ENCODE measurements at regions of chr1 and their contacts with region 1.

Region 1: DNA sequence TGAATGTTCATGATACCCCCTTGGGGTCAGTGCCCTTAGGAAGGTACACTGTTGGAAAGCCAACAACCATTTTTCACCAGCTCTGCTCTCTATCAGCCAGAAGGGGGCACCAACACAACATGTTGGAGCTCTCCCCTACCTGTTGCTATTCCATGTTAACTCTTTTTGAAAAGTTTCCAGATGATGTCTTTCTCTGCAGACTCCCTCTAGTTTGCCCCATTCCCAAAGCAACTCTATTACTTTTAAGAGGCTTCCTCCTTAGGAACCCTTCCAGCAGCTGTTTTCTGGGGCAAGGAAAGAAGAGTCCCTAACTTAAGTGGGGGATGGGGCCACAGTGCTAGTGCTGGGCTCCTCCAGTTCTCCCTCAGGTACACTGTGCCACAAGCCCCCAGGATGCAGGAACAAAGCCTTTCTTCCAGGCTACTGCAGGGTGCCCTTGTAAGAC is 22.9 kb upstream of the NDC1 start:
- DNase-seq: no peak
- ATAC-seq: peak; percentile 68
- H3K4me3 Mint-ChIP-seq: no peak overlapping the region
- H3K27ac Mint-ChIP-seq: no peak overlapping the region
- H3K4me1 Mint-ChIP-seq: peaks cover 25% of the 10 kb centered on the region
- H3K27me3 Mint-ChIP-seq: no peaks in the 10 kb centered on the region
- CTCF ChIP-seq: peak; percentile 42

Region 2: DNA sequence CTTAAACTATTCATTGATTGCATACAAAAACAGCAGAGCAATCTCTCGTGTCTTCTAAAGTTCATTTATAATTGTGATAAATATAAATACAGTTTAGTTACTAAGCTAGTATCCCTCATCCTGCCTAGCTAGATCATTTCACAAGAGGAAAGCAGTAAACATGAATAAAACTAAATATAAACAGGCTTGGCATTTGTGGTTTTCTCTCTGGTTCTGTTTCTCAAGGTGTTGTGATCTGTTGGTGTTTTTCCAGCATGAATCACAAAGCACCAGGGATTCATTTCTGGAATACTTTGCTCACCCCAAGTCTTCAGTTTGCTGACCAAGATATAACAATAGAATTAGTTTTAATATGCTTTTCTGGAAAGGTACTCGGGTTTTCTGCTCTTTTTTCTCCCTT is 89.3 kb before region 1 on chr1:
- CTCF ChIA-PET with region 1: no interaction called
- POLR2A ChIA-PET with region 1: no interaction called
- intact Hi-C with region 1: no loop called
- DNase-seq: no peak
- ATAC-seq: no peak
- H3K4me3 Mint-ChIP-seq: no peak overlapping the region
- H3K27ac Mint-ChIP-seq: no peak overlapping the region
- H3K4me1 Mint-ChIP-seq: peaks cover 4% of the 10 kb centered on the region
- H3K27me3 Mint-ChIP-seq: no peaks in the 10 kb centered on the region
- CTCF ChIP-seq: no peak

Region 3: GRCh38 chr1:53847980-53848379 is 13.0 kb before region 1 on chr1:
- CTCF ChIA-PET with region 1: interaction called, 10 read pairs
- POLR2A ChIA-PET with region 1: no interaction called
- intact Hi-C with region 1: no loop called
- DNase-seq: no peak
- ATAC-seq: no peak
- H3K4me3 Mint-ChIP-seq: no peak overlapping the region
- H3K27ac Mint-ChIP-seq: no peak overlapping the region
- H3K4me1 Mint-ChIP-seq: no peaks in the 10 kb centered on the region
- H3K27me3 Mint-ChIP-seq: no peaks in the 10 kb centered on the region
- CTCF ChIP-seq: no peak

Region 4: DNA sequence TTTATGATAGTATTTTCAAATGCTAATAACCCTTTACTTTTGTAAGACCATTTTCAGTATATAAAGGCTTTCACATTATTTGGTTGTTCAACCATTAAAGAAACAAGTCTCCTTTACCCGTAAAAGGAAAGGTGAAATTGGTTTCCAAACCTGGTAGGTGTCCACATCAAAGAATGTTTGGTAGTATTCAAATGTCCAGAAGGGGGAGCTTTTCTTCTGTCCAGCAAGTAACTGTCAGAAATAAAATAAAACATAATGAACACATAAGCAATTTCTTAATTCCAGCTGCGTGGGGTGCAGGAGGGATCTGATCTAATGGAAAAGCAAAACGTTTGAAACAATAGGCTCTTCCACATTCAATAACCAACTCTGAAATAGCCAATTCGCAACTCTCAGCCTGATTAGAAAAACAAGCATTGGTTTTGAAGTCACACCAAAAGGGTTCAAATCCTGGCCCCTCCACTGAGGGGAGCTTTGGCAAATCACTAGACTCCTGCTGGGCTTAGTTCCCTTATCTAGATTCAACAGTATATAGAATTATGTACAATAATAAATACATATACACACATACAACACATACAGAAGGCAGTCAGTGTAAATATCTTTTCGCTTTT is 17.6 kb after region 1 on chr1:
- CTCF ChIA-PET with region 1: interaction called, 15 read pairs
- POLR2A ChIA-PET with region 1: no interaction called
- intact Hi-C with region 1: loop called (anchors 2 kb)
- DNase-seq: no peak
- ATAC-seq: no peak
- H3K4me3 Mint-ChIP-seq: no peak overlapping the region
- H3K27ac Mint-ChIP-seq: no peak overlapping the region
- H3K4me1 Mint-ChIP-seq: no peaks in the 10 kb centered on the region
- H3K27me3 Mint-ChIP-seq: no peaks in the 10 kb centered on the region
- CTCF ChIP-seq: peak; percentile 56

Region 5: GRCh38 chr1:53959664-53960250 is 98.8 kb after region 1 on chr1:
- CTCF ChIA-PET with region 1: interaction called, 157 read pairs
- POLR2A ChIA-PET with region 1: interaction called, 4 read pairs
- intact Hi-C with region 1: loop called (anchors 1 kb)
- DNase-seq: no peak
- ATAC-seq: peak; percentile 56
- H3K4me3 Mint-ChIP-seq: no peak overlapping the region
- H3K27ac Mint-ChIP-seq: no peak overlapping the region
- H3K4me1 Mint-ChIP-seq: peaks cover 2% of the 10 kb centered on the region
- H3K27me3 Mint-ChIP-seq: no peaks in the 10 kb centered on the region
- CTCF ChIP-seq: peak; percentile 21

Region 6: DNA sequence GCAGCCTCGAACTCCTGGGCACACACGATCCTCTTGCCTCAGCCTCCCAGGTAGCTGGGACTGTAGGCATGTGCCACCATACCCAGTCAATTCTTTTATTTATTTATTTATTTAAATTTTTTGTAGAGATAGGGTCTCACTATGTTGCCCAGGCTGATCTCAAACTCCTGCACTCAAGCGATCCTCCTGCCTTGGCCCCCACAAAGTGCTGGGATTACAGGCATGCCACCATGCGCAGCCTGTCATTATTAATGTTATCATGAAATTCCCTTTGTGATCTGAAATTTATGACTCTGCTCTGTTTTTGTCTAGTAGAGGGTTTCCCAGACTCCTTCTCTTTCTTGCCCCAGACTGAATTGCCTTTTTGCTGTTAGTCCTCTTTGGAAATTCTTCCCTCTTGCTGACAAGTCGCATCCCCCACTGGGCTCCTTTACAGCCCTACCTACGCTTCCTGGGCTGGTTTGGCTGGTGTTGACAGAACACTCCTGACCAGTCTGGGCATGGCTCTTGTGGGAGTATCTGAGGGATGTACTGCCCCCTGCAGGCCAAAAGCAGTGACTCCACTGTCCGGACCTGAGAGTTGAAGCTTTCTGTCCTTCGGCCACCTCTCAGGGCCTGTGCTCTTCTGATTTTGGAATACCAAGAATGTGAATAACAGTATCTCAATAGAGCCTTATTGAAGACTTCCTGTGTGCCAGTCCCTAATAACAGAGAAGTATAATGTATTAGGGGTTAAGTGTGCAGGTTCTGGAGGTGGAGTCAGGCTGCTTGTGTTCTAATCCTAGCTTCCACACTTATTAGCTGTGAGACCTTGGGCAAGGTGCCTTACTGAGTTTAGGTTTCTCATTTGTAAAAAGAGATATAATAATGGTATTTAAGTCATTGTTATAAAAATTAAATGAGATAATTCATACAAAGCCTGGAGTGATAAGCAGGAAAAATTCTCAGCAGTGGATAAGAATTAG is 220.6 kb after region 1 on chr1:
- CTCF ChIA-PET with region 1: interaction called, 16 read pairs
- POLR2A ChIA-PET with region 1: no interaction called
- intact Hi-C with region 1: loop called (anchors 1 kb)
- DNase-seq: peak; percentile 19
- ATAC-seq: peak; percentile 62
- H3K4me3 Mint-ChIP-seq: no peak overlapping the region
- H3K27ac Mint-ChIP-seq: no peak overlapping the region
- H3K4me1 Mint-ChIP-seq: no peaks in the 10 kb centered on the region
- H3K27me3 Mint-ChIP-seq: no peaks in the 10 kb centered on the region
- CTCF ChIP-seq: no peak

Region 7: DNA sequence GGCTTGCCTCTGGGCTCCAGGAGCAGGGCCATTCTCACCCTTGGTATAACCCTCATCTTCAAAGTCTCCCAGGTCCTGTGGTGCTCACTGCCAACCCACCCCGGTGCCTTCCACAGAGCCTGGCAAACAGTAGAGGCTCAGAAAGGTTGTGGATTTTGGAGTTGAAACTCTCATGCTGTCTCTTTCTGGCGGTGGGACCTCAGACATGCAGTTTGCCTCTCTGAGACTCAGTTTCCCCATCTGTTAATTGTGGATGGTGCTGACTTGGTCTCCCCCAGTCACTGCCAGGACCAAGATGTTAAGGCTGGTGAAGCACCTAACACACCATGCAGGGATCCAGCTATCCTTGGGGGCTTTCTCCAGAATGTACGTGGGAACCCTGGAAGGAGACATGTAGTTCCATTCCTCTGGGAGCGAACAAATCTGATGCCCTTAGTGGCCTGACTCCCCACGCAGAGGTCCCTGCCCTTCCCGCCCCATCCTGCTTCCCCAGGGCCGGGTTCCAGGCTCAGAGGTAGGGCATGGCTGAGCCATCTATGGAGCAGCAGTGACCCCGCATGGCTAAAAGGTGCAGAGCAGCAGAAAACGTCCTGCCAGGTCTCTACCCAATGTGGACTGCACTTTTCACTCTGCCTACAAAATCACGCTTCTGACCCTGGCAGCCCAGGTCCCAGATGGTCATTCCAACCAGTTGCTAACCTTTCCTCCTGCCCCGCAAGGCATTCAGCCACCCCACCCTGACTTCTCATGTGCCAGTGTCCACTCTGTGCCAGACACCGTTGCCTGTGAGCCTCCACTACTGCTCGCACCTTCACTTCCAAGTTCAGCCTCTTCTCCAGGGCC is 949.3 kb after region 1 on chr1:
- CTCF ChIA-PET with region 1: interaction called, 4 read pairs
- POLR2A ChIA-PET with region 1: no interaction called
- intact Hi-C with region 1: loop called (anchors 1 kb)
- DNase-seq: peak; percentile 51
- ATAC-seq: peak; percentile 90
- H3K4me3 Mint-ChIP-seq: no peak overlapping the region
- H3K27ac Mint-ChIP-seq: no peak overlapping the region
- H3K4me1 Mint-ChIP-seq: no peaks in the 10 kb centered on the region
- H3K27me3 Mint-ChIP-seq: peaks cover 2% of the 10 kb centered on the region
- CTCF ChIP-seq: no peak

Measured in activated B cell treated with CpG ODN at 0.5 μM for 24 hours (primary cell).